CD4-positive, alpha-beta T cell (primary cell): ENCODE measurements at regions of chr17 and their contacts with region 1.

Region 1: GRCh38 chr17:82205719-82206508 is 6.7 kb downstream of the CCDC57 start:
- DNase-seq: peak; percentile 60 to 91 (median 77)
- ATAC-seq: peak; percentile 86
- H3K4me3 ChIP-seq: peak overlapping the region; percentile 16
- H3K4me3 Mint-ChIP-seq: peak overlapping the region; percentile 23
- H3K27ac ChIP-seq: peak overlapping the region; percentile 77 to 79
- H3K27ac Mint-ChIP-seq: peak overlapping the region; percentile 95
- H3K4me1 ChIP-seq: peaks cover 25% of the 10 kb centered on the region
- H3K4me1 Mint-ChIP-seq: peaks cover 50% of the 10 kb centered on the region
- H3K27me3 ChIP-seq: no peaks in the 10 kb centered on the region
- H3K27me3 Mint-ChIP-seq: no peaks in the 10 kb centered on the region
- CTCF ChIP-seq: peak; percentile 92

Region 2: GRCh38 chr17:82230627-82231311 is 24.9 kb after region 1 on chr17:
- CTCF ChIA-PET with region 1: interaction called, 14 read pairs
- POLR2A ChIA-PET with region 1: interaction called, 17 read pairs
- intact Hi-C with region 1: loop called in 1 of 2 experiments (anchors 5 kb)
- DNase-seq: peak in 7 of 14 experiments; percentile 39 to 79 (median 57)
- ATAC-seq: peak; percentile 24
- H3K4me3 ChIP-seq: peak overlapping the region; percentile 48
- H3K4me3 Mint-ChIP-seq: no peak overlapping the region
- H3K27ac ChIP-seq: peak overlapping the region in 1 of 2 donors; percentile 38
- H3K27ac Mint-ChIP-seq: peak overlapping the region; percentile 84
- H3K4me1 ChIP-seq: peaks cover 54% of the 10 kb centered on the region
- H3K4me1 Mint-ChIP-seq: peaks cover 21% of the 10 kb centered on the region
- H3K27me3 ChIP-seq: no peaks in the 10 kb centered on the region
- H3K27me3 Mint-ChIP-seq: no peaks in the 10 kb centered on the region
- CTCF ChIP-seq: no peak

Region 3: DNA sequence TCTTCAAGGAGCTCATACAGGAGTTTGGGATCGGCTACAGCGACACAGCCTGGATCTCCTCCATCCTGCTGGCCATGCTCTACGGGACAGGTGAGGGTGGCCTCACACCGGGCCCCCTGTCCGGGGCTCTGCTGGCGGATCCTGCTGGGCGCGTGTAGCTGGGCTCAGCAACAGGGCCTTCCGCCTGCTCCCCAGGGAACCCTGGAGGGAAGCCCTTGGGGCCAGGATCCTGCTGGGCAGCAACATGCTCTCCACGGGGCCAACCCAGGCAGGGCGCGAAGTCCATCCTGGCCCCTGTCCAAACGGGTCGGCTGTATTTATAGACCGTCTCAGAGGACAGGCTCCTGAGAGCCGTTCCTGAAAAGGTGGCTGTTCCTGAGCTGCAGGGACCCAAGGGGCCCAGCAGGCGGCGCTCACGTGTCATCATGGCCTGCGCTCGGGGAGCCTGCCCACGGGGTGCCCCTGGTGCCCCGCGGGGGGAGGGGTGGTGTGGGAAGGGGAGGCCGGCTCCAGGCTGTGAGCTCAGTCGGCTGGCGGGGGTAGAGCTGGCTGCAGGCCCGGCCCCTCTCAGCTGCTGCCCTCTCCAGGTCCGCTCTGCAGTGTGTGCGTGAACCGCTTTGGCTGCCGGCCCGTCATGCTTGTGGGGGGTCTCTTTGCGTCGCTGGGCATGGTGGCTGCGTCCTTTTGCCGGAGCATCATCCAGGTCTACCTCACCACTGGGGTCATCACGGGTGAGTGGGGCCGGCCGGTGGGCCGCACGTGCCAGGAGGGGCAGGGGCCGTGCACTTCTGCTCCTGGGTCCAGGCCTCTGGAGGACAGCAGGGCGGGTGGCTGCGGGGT is 30.4 kb after region 1 on chr17:
- CTCF ChIA-PET with region 1: interaction called, 14 read pairs
- POLR2A ChIA-PET with region 1: interaction called, 10 read pairs
- intact Hi-C with region 1: loop called in 1 of 2 experiments (anchors 5 kb)
- DNase-seq: peak; percentile 57 to 87 (median 66)
- ATAC-seq: peak; percentile 48
- H3K4me3 ChIP-seq: no peak overlapping the region
- H3K4me3 Mint-ChIP-seq: no peak overlapping the region
- H3K27ac ChIP-seq: peak overlapping the region in 1 of 2 donors; percentile 32
- H3K27ac Mint-ChIP-seq: peak overlapping the region; percentile 56
- H3K4me1 ChIP-seq: peaks cover 72% of the 10 kb centered on the region
- H3K4me1 Mint-ChIP-seq: peaks cover 40% of the 10 kb centered on the region
- H3K27me3 ChIP-seq: no peaks in the 10 kb centered on the region
- H3K27me3 Mint-ChIP-seq: no peaks in the 10 kb centered on the region
- CTCF ChIP-seq: peak; percentile 84

Region 4: DNA sequence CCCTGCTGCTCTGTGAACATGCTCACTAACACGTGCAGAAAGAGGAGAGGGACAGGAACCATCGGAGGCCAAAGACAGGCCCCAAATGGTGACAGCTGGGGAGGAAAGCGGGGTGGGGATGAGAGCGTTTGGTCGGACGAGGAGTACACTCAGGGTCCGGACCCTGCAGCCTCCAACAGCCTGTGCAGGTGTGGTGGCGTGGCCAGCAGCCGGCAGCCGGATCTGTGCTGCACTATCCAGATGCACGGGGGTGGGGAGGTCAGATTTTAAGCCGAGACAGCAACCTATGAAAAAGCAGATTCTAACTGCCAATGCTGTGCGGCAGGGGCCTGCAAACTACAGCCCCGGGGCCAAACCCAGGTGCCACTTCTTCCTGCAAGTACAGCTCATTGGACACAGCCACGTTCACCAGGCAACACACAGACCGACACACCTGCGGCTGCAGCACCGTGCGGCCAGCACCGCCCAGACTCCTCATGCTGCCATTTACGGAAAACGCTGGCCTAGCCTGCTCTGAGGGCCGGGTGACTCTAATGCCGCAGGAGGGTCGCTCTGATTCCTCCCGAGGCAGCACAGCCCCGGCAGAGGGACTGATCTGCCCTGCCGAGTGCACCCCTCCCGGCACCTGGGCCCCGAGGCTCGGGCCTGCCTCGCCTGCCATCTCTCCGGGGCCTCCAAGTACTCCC is 44.1 kb after region 1 on chr17:
- CTCF ChIA-PET with region 1: no interaction called
- POLR2A ChIA-PET with region 1: no interaction called
- intact Hi-C with region 1: no loop called
- DNase-seq: no peak
- ATAC-seq: no peak
- H3K4me3 ChIP-seq: no peak overlapping the region
- H3K4me3 Mint-ChIP-seq: no peak overlapping the region
- H3K27ac ChIP-seq: no peak overlapping the region
- H3K27ac Mint-ChIP-seq: no peak overlapping the region
- H3K4me1 ChIP-seq: peaks cover 26% of the 10 kb centered on the region
- H3K4me1 Mint-ChIP-seq: peaks cover 6% of the 10 kb centered on the region
- H3K27me3 ChIP-seq: no peaks in the 10 kb centered on the region
- H3K27me3 Mint-ChIP-seq: no peaks in the 10 kb centered on the region
- CTCF ChIP-seq: no peak